ENCODE measurements at regions of chr3 and their contacts with region 1.

Region 1: DNA sequence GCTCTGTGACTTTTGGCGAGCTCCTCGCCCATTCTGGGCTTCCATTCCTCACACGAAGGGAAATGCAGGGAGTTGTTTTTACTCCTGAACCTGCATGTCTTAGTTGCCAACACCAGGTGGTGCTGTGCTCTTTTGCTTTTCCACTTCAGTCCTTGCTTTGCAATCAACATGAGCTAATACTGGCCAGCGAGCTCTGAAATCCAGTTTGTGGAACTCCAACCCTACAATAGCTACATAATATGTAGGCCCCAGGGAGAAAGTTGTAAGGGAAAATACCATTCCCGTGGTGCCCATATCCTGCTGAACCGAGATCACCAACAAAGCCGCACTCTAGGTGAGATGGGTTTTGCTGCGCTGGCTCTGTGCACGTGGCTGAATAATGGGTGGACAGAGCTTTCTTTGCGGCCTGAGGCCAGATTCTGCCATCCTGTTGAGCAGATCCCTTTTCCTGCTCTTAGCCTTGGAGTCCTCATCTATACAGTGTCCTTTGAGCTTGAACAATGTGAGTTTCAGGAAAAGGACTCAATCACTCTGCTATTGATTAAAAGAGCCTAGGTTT is 25.0 kb downstream of the LSM3 start:
- DNase-seq: peak; percentile 65 to 94
- H3K4me3 ChIP-seq: no peak overlapping the region
- H3K27ac ChIP-seq: peak overlapping the region in 1 of 5 donors; percentile 76
- H3K4me1 ChIP-seq: peaks cover 7 to 44% (median 19%) of the 10 kb centered on the region in 4 donors
- H3K27me3 ChIP-seq: no peaks in the 10 kb centered on the region
- CTCF ChIP-seq: peak in 6 of 7 experiments; percentile 30 to 87 (median 81)
- EP300 ChIP-seq: no peak
- POLR2A ChIP-seq: no peak

Region 2: GRCh38 chr3:14031271-14031670 is 172.3 kb before region 1 on chr3:
- intact Hi-C with region 1: no loop called
- DNase-seq: no peak
- H3K4me3 ChIP-seq: no peak overlapping the region
- H3K27ac ChIP-seq: no peak overlapping the region
- H3K4me1 ChIP-seq: no peaks in the 10 kb centered on the region
- H3K27me3 ChIP-seq: no peaks in the 10 kb centered on the region
- CTCF ChIP-seq: no peak
- EP300 ChIP-seq: no peak
- POLR2A ChIP-seq: no peak

Region 3: GRCh38 chr3:14261229-14261628 is 57.6 kb after region 1 on chr3:
- intact Hi-C with region 1: loop called (anchors 10 kb)
- DNase-seq: peak; percentile 90 to 93
- H3K4me3 ChIP-seq: no peak overlapping the region
- H3K27ac ChIP-seq: no peak overlapping the region
- H3K4me1 ChIP-seq: peaks cover 0 to 21% (median 13%) of the 10 kb centered on the region in 4 donors
- H3K27me3 ChIP-seq: peaks cover 0 to 3% (median 0%) of the 10 kb centered on the region in 3 donors
- CTCF ChIP-seq: peak in 6 of 7 experiments; percentile 88 to 98 (median 93)
- EP300 ChIP-seq: no peak
- POLR2A ChIP-seq: no peak

Region 4: GRCh38 chr3:14273901-14274611 is 70.5 kb after region 1 on chr3:
- intact Hi-C with region 1: no loop called
- DNase-seq: no peak
- H3K4me3 ChIP-seq: no peak overlapping the region
- H3K27ac ChIP-seq: no peak overlapping the region
- H3K4me1 ChIP-seq: peaks cover 0 to 3% (median 0%) of the 10 kb centered on the region in 4 donors
- H3K27me3 ChIP-seq: peaks cover 0 to 14% (median 0%) of the 10 kb centered on the region in 3 donors
- CTCF ChIP-seq: no peak
- EP300 ChIP-seq: no peak
- POLR2A ChIP-seq: no peak

Region 5: DNA sequence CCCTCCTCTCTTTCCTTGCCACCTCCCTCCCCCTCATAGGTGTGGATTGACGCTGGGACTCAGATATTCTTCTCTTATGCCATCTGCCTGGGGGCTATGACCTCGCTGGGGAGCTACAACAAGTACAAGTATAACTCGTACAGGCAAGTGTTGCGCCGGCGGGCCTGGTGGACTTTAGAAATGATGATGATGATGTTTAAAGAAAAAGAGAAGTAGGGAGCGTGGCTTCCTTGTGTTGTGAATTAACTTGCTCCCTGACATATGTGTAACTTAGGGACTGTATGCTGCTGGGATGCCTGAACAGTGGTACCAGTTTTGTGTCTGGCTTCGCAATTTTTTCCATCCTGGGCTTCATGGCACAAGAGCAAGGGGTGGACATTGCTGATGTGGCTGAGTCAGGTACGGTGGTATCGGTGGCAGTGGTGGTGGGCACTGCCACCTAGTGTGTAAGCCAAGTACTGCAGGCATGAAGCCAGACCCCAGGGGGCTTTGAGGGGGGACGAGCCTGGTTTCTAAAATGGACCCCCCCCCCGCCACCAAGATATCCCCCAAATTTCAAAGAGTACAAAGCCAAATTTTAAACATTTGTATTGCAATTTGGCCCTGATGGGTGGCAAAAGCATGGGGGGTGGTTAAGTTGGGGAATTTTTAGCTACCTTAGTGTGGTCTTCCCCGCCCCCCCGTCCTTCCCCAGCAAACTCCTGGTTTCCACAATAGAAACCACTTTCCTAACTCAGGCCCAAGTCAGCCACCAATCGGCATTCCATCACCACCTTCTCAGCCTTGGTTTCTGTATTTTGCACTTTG is 264.4 kb after region 1 on chr3:
- intact Hi-C with region 1: loop called (anchors 5 kb)
- DNase-seq: peak; percentile 35 to 78
- H3K4me3 ChIP-seq: no peak overlapping the region
- H3K27ac ChIP-seq: no peak overlapping the region
- H3K4me1 ChIP-seq: peaks cover 0 to 8% (median under 1%) of the 10 kb centered on the region in 4 donors
- H3K27me3 ChIP-seq: no peaks in the 10 kb centered on the region
- CTCF ChIP-seq: peak in 5 of 7 experiments; percentile 62 to 90 (median 81)
- EP300 ChIP-seq: no peak
- POLR2A ChIP-seq: no peak